ENCODE measurements at regions of chr3 and their contacts with region 1.

Region 1: DNA sequence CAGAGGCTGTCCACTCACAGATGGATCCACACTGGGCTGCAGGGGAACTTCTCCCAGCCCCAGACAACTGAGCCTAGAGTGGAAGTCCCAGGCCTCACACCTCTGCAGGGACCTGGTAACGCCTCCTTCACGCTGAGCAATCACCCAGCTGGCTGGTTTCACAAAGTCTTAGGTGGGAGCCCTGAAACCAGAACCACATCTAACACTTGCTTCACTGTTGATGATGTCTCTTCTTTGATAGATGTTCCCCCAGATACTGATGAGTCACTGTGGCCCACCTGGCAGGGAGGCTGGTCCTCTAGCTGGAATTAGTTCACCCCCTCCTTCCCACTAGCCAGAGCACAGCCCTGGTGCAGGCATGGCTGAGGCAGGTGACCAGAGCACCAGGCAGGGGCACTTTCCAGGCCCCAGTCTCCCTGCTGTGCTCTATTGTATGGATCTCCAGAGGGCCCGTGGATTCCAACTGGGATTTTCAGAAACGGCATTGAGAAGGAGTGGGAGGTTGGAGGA is 33.5 kb downstream of the MYL3 start:
- DNase-seq: no peak
- ATAC-seq: peak in 1 of 8 donors; percentile 2
- H3K4me3 ChIP-seq: no peak overlapping the region
- H3K27ac ChIP-seq: no peak overlapping the region
- H3K4me1 ChIP-seq: peaks cover 0 to 9% (median 0%) of the 10 kb centered on the region in 9 donors
- H3K27me3 ChIP-seq: no peaks in the 10 kb centered on the region
- CTCF ChIP-seq: no peak

Region 2: DNA sequence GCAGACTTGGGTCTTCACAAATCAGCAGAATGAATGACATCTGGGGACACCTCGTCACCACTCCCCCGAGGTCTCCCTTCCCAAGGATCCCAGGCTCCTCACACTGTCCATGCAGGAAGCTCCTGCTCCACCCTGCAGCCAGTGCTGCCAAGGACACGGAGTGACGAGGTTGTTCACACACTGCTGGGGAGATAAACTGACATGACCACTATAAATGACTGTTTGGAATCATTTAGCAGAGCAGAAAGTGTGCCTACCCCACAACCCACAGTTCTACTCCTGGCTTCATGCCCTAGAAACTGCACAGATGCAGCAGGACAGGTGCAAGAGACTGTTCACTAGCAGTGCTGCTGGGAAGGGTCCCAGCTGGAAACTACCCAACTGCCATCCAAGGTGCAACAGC is 92.4 kb before region 1 on chr3:
- intact Hi-C with region 1: loop called in 1 of 10 experiments (anchors 5 kb)
- DNase-seq: no peak
- ATAC-seq: peak in 3 of 8 donors; percentile 55 to 75 (median 59)
- H3K4me3 ChIP-seq: no peak overlapping the region
- H3K27ac ChIP-seq: no peak overlapping the region
- H3K4me1 ChIP-seq: no peaks in the 10 kb centered on the region
- H3K27me3 ChIP-seq: peaks cover 0 to 8% (median 3%) of the 10 kb centered on the region in 7 donors
- CTCF ChIP-seq: no peak

Measured in heart right ventricle (tissue), 16 donors.